Pancreas (tissue), 10 donors: ENCODE measurements at regions of chr7 and their contacts with region 1.

Region 1: DNA sequence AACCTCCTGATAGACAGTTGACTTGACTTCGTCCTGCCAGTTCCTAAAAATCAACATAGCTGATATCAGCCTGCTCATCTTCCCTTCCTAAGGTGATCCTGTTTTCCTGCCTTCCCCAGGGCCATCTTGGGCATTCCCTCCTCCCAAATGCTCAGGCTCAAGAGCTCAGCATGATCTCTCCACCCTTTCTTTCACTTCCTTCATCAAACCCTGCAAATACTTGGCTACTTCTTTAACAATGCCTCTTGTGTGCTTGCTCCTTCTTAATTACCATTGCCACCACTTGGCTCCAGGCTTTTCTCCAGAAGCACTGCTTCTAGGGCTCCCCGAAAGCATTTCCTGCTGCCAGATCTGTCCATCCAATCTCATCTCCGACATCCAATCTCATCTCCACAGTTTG is 7.3 kb downstream of the FSCN3 start:
- DNase-seq: no peak
- ATAC-seq: no peak
- H3K4me3 ChIP-seq: no peak overlapping the region
- H3K27ac ChIP-seq: no peak overlapping the region
- H3K4me1 ChIP-seq: no peaks in the 10 kb centered on the region
- H3K27me3 ChIP-seq: no peaks in the 10 kb centered on the region
- CTCF ChIP-seq: no peak

Region 2: DNA sequence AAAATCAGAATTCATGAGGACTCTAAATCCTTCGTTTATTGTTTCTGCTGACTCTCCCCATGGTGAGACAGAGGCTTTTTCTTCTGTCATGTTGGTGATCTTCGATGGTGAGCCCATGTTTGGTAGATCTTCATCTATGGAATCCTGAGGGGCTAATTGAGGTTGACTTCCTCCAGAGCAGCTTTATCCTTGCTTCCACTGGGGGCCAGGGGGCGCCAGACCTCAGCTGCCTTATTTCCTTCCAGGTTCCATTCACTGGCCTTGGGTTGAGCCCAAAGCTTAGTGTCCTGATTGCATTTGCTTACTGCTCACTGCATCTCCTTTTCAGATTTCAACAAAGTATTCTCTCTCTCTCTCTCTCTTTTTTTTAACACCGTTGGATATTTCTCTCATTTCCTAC is 96.2 kb before region 1 on chr7:
- intact Hi-C with region 1: no loop called
- DNase-seq: peak in 5 of 6 donors; percentile 18 to 65 (median 31)
- ATAC-seq: peak; percentile 40 to 81 (median 66)
- H3K4me3 ChIP-seq: no peak overlapping the region
- H3K27ac ChIP-seq: no peak overlapping the region
- H3K4me1 ChIP-seq: no peaks in the 10 kb centered on the region
- H3K27me3 ChIP-seq: no peaks in the 10 kb centered on the region
- CTCF ChIP-seq: peak in 3 of 4 donors; percentile 15 to 36 (median 22)

Region 3: GRCh38 chr7:127536741-127537140 is 64.1 kb before region 1 on chr7:
- intact Hi-C with region 1: no loop called
- DNase-seq: no peak
- ATAC-seq: peak in 1 of 4 donors; percentile 34
- H3K4me3 ChIP-seq: peak overlapping the region in 1 of 4 donors; percentile 20
- H3K27ac ChIP-seq: no peak overlapping the region
- H3K4me1 ChIP-seq: no peaks in the 10 kb centered on the region
- H3K27me3 ChIP-seq: no peaks in the 10 kb centered on the region
- CTCF ChIP-seq: no peak

Region 4: DNA sequence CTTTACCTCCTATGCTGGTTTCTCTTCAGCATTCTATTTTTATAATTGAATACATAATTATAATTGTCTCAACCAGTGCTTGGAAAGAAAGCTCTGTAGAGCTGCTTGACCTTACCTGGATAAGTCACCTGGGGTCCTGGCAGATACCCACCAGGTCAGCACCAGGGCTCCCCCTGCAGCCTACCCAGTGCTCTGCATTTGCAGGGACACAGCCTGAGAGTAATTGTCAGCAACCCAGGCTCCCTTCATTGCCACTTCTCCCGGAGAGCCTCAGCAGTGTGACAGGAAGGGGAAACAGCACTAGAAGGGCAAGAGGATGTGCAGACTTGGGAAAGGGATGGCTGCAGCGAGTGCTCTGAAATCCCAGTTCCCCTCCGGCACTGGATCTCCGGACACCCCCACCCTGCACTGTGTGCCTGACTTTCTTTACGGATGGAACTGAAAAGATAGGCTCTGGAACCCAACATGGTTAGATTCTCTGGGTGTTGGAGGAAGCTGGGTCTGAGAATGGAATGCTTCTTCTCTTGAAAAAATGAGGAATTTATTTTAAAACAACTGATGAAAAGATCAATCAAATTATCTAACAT is 28.5 kb after region 1 on chr7:
- intact Hi-C with region 1: loop called in 1 of 3 experiments (anchors 2 kb)
- DNase-seq: peak; percentile 59 to 83 (median 78)
- ATAC-seq: peak; percentile 97 to 100 (median 98)
- H3K4me3 ChIP-seq: no peak overlapping the region
- H3K27ac ChIP-seq: no peak overlapping the region
- H3K4me1 ChIP-seq: no peaks in the 10 kb centered on the region
- H3K27me3 ChIP-seq: no peaks in the 10 kb centered on the region
- CTCF ChIP-seq: peak in 3 of 4 donors; percentile 39 to 51 (median 40)